ENCODE measurements at regions of chr1 and their contacts with region 1.

Region 1: DNA sequence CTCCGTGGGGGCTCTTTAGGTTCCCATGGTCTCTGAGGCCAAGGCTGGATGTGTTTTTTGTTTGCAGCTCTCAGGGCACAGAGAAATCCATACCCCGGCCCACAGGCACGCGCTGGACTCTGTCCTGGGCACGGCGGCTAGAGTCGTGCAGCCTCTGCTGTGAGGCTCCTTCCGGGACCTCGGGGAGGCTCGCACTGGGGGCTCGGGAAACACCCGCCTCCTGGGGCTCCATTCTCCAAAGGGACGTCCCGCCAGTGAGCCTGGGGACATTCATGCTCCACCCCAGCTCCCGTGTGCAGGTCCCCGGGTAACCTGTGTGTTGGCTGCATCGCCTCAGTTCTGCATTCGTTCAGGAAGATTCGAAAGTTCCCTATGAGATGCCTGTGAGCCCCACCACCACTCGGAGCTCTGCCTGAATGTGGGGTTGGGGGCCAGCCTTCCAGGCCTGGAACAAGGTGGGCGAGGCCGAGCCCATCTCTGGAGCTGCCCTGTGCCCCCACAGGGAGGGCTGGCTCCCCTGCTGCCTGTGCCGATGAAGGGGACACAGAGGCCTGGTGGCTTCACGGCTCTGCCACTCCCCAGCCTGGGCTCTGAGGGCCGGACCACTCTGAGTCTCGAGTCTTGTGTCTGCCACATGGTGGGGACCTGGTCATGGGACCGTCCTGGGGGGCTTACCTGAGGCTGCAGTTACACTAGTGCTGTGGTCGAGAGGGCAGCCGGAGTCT is 182.0 kb upstream of the ARHGEF16 start:
- DNase-seq: no peak
- H3K27ac ChIP-seq: no peak overlapping the region
- CTCF ChIP-seq: no peak

Region 2: GRCh38 chr1:3444736-3445135 is 172.3 kb after region 1 on chr1:
- CTCF ChIA-PET with region 1: no interaction called
- POLR2A ChIA-PET with region 1: interaction called, 11 read pairs
- DNase-seq: no peak
- H3K27ac ChIP-seq: no peak overlapping the region
- CTCF ChIP-seq: no peak